Mammary epithelial cell (primary cell): ENCODE measurements at regions of chr3 and their contacts with region 1.

Region 1: DNA sequence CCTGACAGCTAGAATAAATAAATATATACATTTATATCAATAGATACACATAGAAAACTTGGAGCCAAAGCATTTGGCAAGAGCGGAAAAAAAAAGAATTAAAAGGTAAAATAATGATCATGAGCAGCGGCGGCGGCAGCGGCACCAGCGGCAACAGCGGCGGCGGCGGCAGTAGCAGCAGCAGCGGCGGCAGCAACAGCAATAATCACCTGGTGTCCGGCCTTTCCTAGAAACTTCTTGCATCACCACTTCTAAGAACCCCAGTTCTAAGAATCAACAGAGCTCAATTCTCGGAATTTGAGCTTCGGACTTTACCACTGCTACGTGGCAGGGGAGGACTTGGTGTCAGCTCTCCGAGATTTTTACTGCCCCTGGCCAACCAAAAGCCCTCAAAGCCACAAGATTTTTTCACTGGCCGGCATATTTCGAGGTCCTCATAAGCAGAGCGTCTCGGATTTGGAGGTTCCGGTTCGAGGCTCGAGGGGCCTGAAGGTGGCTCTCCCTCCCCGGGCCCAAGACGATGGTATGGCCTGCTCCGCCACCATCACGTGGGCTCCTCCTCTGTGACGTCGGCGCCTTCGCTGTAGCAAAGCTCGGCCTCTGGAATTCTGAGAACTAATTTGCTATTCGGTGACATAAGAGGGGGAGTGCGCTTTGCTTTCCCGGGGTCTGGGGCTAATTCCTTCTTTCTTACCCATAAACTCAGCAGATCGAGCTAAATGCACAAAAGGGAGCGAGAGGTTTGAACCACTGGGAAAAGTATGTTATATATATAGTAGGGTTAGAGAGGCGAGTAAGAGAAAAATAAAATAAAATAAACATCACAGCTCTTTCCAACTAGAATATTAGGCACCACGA is at the start of gene BCL6:
- DNase-seq: peak; percentile 98
- H3K4me3 ChIP-seq: peak within 1 kb of the TSS; percentile 67 to 98 (median 78)
- H3K27ac ChIP-seq: peak within 1 kb of the TSS; percentile 100
- H3K4me1 ChIP-seq: peaks cover 37% of the 10 kb centered on the region
- H3K27me3 ChIP-seq: no peaks in the 10 kb centered on the region
- CTCF ChIP-seq: peak; percentile 2 to 6
- total RNA-seq, gene BCL6: 14.0 to 26.8 TPM

Region 2: GRCh38 chr3:187587076-187587475 is 158.4 kb before region 1 on chr3:
- CTCF ChIA-PET with region 1: no interaction called
- dilution Hi-C with region 1: no loop called
- in situ Hi-C with region 1: no loop called
- intact Hi-C with region 1: no loop called
- DNase-seq: no peak
- H3K4me3 ChIP-seq: no peak overlapping the region
- H3K27ac ChIP-seq: no peak overlapping the region
- H3K4me1 ChIP-seq: no peaks in the 10 kb centered on the region
- H3K27me3 ChIP-seq: peaks cover 3% of the 10 kb centered on the region
- CTCF ChIP-seq: no peak

Region 3: DNA sequence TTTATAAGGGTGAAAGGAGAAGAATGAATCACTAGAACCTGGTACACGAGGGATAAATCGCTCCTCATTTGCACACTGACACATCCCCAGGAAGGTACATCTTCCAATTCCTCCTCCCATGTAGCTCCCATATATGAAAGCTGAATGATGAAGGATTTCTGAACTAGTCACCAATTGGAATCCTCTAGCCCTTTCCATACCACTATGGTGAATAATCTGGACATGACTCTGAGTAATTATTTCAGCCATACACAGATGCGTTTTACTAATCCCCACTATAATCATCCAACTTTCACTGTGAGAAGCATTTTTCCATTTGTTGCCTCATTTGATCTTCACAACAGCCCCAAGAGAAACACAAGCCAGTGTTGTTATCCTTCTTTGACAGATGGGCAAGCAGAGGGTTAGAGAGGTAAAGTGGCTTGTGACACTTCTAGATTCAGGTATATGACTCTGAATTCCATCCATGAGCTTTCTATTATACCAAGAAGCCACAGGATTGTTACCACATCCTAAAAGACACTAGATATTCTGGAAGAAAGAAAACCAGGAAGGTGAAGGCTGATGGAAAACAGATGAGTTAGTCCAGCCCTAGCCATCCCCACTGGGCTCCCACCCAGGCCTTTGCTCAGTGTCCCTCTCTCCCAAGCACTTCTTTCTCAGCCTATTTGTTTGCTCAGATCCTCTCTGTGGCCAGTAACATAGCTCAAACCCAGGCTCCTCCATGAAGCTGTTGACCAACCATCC is 22.0 kb after region 1 on chr3:
- CTCF ChIA-PET with region 1: interaction called, 10 read pairs
- dilution Hi-C with region 1: no loop called
- in situ Hi-C with region 1: no loop called
- intact Hi-C with region 1: no loop called
- DNase-seq: peak; percentile 80
- H3K4me3 ChIP-seq: no peak overlapping the region
- H3K27ac ChIP-seq: no peak overlapping the region
- H3K4me1 ChIP-seq: peaks cover 20% of the 10 kb centered on the region
- H3K27me3 ChIP-seq: no peaks in the 10 kb centered on the region
- CTCF ChIP-seq: no peak

Region 4: DNA sequence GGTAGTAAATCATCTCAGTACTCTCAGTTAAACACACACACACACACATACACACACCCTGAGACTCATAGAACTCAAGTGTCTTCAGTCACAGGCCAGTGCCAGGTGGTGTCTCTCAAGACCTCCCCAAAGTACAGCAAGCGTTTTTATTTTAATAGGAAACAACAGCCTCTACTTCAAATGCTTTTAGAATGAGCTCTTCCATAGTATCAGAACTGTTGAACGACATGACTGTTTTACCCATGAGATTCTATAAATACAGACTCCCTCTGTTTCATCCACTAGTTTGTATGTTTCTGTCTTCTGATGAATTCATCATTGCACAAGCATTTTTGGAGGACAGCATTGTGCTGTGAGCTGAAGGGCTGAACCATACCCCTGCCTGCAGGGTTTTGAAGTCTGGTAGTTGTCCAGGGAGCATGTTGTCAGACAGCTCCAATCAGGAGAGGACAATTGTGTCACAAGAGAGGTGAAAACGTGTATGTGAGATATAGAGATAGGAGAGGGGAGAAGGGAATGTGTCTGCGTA is 200.8 kb after region 1 on chr3:
- CTCF ChIA-PET with region 1: no interaction called
- dilution Hi-C with region 1: no loop called
- in situ Hi-C with region 1: no loop called
- intact Hi-C with region 1: no loop called
- DNase-seq: no peak
- H3K4me3 ChIP-seq: no peak overlapping the region
- H3K27ac ChIP-seq: no peak overlapping the region
- H3K4me1 ChIP-seq: peaks cover 5% of the 10 kb centered on the region
- H3K27me3 ChIP-seq: no peaks in the 10 kb centered on the region
- CTCF ChIP-seq: no peak

Region 5: GRCh38 chr3:187986514-187986934 is 241.1 kb after region 1 on chr3:
- CTCF ChIA-PET with region 1: no interaction called
- dilution Hi-C with region 1: no loop called
- in situ Hi-C with region 1: no loop called
- intact Hi-C with region 1: loop called (anchors 2 kb)
- DNase-seq: peak; percentile 95
- H3K4me3 ChIP-seq: no peak overlapping the region
- H3K27ac ChIP-seq: peak overlapping the region; percentile 18
- H3K4me1 ChIP-seq: peaks cover 20% of the 10 kb centered on the region
- H3K27me3 ChIP-seq: no peaks in the 10 kb centered on the region
- CTCF ChIP-seq: peak in 1 of 2 donors; percentile 24

Region 6: DNA sequence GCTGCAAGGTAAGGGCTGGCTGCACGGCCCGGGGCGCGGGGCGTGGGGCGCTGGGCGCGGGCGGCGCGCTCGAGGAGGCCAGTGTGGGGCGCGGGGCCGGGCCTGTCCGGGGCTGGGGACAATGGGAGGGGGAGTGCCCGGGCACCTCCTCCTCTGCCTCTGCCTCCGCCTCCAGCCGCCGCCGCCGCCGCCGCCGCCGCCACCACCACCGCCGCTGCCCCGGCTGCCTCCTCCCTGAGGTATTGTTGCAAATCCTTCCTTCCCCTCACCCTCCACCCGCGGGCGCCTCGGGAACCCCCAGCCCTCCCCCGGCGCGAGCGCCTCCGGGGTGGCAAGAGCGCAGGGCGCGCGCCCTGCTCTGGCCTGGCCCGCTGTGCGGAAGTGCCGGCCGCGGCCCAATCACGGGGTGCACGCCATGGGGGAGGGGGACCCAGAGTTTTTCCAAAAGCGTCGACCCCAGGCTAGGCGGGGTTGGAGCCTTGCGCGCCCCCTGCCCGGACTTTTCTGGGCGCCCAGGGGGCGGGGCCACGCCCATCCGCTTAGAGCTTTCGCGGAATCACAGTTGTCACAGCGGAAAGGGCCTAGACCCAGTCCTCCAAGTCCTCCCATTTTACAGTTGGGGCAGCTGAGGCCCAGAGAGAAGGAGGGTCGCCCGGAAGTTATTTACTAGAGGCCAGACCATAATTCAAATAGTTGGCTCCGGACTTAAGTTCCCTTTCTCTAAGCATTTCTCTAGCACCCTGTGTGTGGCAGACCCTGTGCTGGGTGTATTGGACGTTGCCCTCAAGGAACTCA is 408.8 kb after region 1 on chr3 and contains the start of gene LPP:
- CTCF ChIA-PET with region 1: interaction called, 7 read pairs
- dilution Hi-C with region 1: loop called (anchors 25 kb)
- in situ Hi-C with region 1: no loop called
- intact Hi-C with region 1: loop called (anchors 1 kb)
- DNase-seq: peak; percentile 85
- H3K4me3 ChIP-seq: peak within 1 kb of the TSS; percentile 43 to 77 (median 66)
- H3K27ac ChIP-seq: peak within 1 kb of the TSS; percentile 94
- H3K4me1 ChIP-seq: peaks cover 32% of the 10 kb centered on the region
- H3K27me3 ChIP-seq: no peaks in the 10 kb centered on the region
- CTCF ChIP-seq: no peak
- total RNA-seq, gene LPP: 66.8 to 109 TPM

Region 7: GRCh38 chr3:188242436-188243123 is 497.1 kb after region 1 on chr3:
- CTCF ChIA-PET with region 1: no interaction called
- dilution Hi-C with region 1: no loop called
- in situ Hi-C with region 1: no loop called
- intact Hi-C with region 1: loop called (anchors 2 kb)
- DNase-seq: peak; percentile 75
- H3K4me3 ChIP-seq: peak overlapping the region in 1 of 3 experiments; percentile 10
- H3K27ac ChIP-seq: peak overlapping the region; percentile 78
- H3K4me1 ChIP-seq: peaks cover 27% of the 10 kb centered on the region
- H3K27me3 ChIP-seq: no peaks in the 10 kb centered on the region
- CTCF ChIP-seq: no peak

Region 8: DNA sequence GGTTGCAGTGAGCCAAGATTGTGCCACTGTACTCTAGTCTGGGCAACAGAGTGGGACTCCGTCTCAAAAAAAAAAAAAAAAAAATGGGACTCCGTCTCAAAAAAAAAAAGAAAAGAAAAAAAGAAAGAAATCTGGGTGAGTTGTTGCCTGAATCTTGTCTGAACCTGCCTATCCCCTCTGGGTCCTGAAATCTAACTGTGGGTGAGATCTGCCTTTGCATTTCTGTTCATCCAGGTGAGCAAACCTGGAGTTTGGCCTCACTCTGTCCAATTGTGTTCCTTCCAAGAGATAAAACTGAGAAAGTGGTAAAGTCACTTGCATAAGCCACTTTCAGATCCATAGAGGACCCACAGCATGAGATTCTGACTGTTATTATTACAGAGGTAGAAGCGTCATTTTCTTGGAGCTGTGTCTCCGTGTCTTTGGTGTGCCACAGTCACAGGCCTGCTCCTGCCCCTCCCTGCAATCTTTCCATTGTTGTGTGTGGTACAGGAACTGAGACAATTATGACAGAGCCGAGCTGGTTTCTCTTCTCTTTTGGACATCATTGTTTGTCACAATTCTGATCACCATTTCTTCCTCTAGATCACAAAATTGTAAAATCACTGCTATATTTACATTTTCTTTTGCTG is 644.4 kb after region 1 on chr3:
- CTCF ChIA-PET with region 1: no interaction called
- dilution Hi-C with region 1: no loop called
- in situ Hi-C with region 1: loop called in 1 of 2 experiments (anchors 25 kb)
- intact Hi-C with region 1: loop called (anchors 2 kb)
- DNase-seq: peak; percentile 74
- H3K4me3 ChIP-seq: peak overlapping the region in 2 of 3 experiments; percentile 6 to 17
- H3K27ac ChIP-seq: peak overlapping the region; percentile 95
- H3K4me1 ChIP-seq: peaks cover 37% of the 10 kb centered on the region
- H3K27me3 ChIP-seq: no peaks in the 10 kb centered on the region
- CTCF ChIP-seq: no peak

Region 9: DNA sequence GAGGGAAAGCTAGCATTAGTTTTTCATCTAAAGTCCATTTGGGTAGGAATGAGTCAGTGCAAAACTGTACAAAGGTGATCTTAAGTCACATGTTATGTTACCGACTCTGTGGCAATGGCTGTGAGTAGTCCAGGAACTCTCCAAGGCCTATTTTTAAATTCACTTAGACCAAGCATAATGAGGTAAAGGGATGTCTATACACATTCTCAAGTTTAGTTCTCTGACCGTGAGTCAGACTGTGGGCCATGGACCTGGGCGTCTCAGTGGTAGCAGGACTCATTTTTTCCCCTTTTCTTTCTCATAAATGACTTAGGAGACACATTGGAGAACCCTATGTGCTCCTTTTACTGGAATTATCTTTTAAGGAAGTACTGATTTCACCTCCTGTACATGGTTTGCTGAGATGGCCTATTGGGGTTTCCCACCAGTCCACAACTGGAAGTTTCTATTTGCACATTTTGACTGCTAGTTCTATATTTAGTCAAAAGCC is 937.6 kb after region 1 on chr3:
- CTCF ChIA-PET with region 1: no interaction called
- dilution Hi-C with region 1: no loop called
- in situ Hi-C with region 1: loop called in 1 of 2 experiments (anchors 25 kb)
- intact Hi-C with region 1: loop called (anchors 1 kb)
- DNase-seq: peak; percentile 43
- H3K4me3 ChIP-seq: no peak overlapping the region
- H3K27ac ChIP-seq: no peak overlapping the region
- H3K4me1 ChIP-seq: peaks cover 8% of the 10 kb centered on the region
- H3K27me3 ChIP-seq: no peaks in the 10 kb centered on the region
- CTCF ChIP-seq: no peak